ENCODE measurements at regions of chr4 and their contacts with region 1.

Region 1: DNA sequence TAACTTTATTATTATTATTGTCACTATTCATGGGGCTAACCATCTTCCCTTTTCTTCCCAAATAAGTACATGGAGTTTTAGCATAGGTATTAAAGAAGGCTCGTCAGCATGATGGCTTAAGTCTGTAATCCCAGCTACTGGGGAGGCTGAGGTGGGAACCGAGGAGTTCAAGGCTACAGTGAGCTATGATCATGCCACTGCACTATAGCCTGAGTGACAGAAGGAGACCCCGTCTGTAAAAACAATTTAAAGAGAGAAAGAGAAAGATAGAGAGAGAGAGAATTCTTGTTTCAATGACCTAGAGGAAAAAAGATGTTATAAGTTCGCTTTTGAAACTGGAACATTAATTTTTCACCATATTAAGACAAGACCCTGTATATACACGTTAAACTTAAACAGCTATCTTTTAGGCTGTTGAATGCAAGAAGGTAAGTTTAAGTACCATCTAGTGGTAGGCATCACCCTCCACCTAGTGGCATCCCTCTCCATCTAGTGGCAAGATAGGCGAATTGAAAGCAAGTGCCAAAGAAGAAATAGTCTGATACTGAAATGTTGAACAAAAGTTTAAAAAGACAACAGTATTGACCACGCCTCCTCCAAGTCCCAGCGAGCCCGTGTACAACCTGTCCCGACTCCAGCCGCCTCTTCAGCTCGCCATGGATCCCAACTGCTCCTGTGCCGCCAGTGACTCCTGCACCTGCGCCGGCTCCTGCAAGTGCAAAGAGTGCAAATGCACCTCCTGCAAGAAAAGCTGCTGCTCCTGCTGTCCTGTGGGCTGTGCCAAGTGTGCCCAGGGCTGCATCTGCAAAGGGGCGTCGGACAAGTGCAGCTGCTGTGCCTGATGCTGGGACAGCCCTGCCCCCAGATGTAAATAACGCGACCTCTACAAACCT is 26.0 kb upstream of the YTHDC1 start:
- DNase-seq: peak in 6 of 10 donors; percentile 16 to 74 (median 36)

Region 2: GRCh38 chr4:67809502-67809901 is 566.4 kb before region 1 on chr4:
- intact Hi-C with region 1: no loop called
- DNase-seq: peak in 2 of 10 donors; percentile 35 to 56

Region 3: GRCh38 chr4:68271851-68272756 is 103.8 kb before region 1 on chr4:
- intact Hi-C with region 1: loop called (anchors 1 kb)
- DNase-seq: peak in 2 of 10 donors; percentile 3 to 65